Posterior cingulate gyrus (tissue), 11 donors: ENCODE measurements at regions of chr3 and their contacts with region 1.

Region 1: GRCh38 chr3:42190701-42191462 is 75.1 kb downstream of the CCK start:
- DNase-seq: peak in 7 of 10 donors; percentile 51 to 92 (median 73)

Region 2: GRCh38 chr3:41893977-41894376 is 296.9 kb before region 1 on chr3:
- intact Hi-C with region 1: loop called (anchors 5 kb)
- DNase-seq: no peak

Region 3: DNA sequence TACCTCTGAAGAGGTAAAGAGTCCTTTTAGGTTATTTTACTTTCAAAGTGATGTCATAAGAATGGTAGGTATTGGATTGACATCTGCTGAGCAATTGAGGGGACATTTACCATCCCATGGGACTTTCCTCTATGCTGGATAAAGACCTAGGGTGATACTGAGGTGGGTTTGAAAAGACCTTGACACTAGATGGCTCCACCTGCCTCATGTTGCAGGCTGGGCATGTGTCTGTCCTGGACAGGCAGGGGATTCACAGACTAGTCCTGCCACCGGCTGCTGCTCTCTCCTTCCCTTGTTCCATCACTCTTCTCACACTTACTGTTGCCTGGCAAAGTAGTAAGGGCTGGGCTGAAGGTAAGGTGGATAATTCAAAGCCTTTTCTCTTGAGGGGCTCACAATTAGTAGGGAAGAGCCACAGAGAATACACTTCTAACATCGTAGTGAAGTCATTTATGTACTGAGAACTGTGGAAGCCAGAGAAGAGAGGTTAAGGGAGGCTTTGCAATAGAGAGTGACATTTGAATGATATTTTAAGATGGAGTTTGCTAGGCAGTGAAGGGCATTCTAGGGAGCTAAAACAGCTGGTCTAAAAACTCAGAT is 72.0 kb before region 1 on chr3:
- intact Hi-C with region 1: loop called (anchors 1 kb)
- DNase-seq: peak in 4 of 10 donors; percentile 40 to 88 (median 55)

Region 4: GRCh38 chr3:42148982-42149432 is 41.9 kb before region 1 on chr3:
- intact Hi-C with region 1: loop called (anchors 2 kb)
- DNase-seq: peak; percentile 87 to 99 (median 93)